Right cardiac atrium (tissue), 5 donors: ENCODE measurements at regions of chr12 and their contacts with region 1.

Region 1: GRCh38 chr12:121678716-121679580 is 9.5 kb upstream of the MORN3 start:
- DNase-seq: no peak
- ATAC-seq: no peak
- H3K4me3 ChIP-seq: no peak overlapping the region
- H3K27ac ChIP-seq: no peak overlapping the region
- H3K4me1 ChIP-seq: no peaks in the 10 kb centered on the region
- H3K27me3 ChIP-seq: no peaks in the 10 kb centered on the region

Region 2: DNA sequence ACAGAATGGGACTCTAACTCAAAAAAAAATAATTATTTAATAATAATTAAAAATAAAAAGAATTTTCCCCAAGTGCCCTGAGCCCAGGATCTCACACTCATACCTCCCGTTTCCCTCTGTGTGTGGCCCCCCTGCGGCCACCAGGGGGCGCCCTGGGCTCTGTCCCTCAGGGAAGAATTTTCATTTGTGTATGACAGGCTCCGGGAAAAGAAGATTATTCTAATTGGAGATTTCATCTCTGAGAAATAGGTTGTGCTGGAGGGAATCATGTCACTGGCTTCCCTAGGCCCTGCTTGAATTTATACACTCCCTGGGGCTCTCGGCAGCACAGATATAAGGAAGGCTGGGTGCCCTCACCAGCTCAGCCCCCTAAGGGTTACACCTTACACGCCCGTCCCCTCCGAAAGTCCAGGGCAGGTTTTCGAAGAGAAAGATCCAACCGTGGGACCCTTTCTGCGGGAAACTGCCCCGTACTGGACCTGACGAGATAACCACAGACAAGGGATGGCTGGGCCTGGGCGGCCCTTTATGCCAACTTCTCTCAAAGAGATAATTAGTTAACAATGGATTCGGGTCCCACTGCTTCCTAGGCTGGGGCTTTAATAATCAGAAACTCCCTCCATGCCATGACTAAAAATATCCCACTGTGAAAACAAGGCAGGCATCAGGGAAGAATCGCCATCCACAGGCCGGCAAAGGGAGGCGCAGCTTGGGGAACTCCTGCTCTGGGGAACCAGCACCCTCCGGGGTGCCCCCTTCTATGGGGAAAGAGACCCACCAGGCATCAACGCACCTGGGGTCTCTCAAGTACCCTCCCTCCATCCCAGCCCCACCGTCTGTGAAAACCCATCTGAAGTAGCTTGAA is 178.8 kb before region 1 on chr12:
- intact Hi-C with region 1: loop called in 2 of 4 experiments (anchors 5 to 10 kb)
- DNase-seq: peak; percentile 80 to 93 (median 93)
- ATAC-seq: peak; percentile 84 to 85
- H3K4me3 ChIP-seq: peak overlapping the region; percentile 19
- H3K27ac ChIP-seq: peak overlapping the region; percentile 88
- H3K4me1 ChIP-seq: no peaks in the 10 kb centered on the region
- H3K27me3 ChIP-seq: no peaks in the 10 kb centered on the region

Region 3: DNA sequence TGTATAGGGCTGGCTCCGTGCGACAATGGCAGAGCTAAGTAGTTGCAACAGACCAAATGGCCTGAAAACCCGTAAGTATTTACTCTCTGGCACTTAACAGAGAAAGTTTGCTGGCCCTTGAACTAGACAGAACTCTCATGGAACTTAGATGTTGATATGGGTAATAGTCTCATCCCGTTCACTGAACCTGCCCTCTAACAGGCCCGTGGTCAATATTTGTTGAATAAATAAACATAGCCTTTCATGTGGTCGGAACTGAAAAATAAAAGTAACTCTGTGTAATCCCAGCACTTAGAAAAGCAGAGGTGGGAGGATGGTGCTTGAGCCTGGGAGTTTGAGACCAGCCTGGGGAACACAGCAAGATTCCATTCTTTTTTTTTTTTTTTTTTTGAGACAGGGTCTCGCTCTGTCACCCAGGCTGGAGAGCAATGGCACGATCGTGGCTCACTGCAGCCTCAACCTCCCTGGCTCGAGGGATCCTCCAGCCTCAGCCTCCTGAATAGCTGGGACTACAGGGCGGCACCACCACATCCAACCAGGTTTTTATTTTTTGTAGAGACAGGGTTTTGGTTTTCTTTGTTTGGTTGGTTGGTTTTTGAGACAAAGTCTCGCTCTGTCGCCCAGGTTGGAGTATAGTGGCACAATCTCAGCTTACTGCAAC is 127.8 kb before region 1 on chr12:
- intact Hi-C with region 1: loop called (anchors 5 kb)
- DNase-seq: no peak
- ATAC-seq: no peak
- H3K4me3 ChIP-seq: no peak overlapping the region
- H3K27ac ChIP-seq: no peak overlapping the region
- H3K4me1 ChIP-seq: no peaks in the 10 kb centered on the region
- H3K27me3 ChIP-seq: no peaks in the 10 kb centered on the region

Region 4: DNA sequence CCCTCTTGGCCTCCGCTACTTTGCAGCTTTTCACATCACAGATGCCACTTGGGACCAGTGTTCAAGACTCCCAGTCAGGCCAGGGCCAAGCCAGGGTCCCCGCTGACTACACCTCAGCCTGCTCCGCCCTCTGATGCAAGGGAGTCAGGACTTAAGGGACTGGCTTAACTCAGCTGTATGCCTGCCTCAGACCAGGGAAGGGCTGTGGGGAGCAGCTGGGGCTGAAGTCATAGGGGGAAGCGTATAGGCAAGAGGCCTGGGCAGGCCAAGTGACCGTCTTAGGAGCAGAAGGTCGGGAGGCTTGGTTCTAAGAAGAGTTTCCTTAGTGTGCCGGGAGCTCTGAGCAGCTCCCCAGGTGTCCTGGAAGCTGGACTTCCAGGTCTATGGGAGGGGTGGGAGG is 120.0 kb before region 1 on chr12:
- intact Hi-C with region 1: loop called (anchors 5 kb)
- DNase-seq: no peak
- ATAC-seq: no peak
- H3K4me3 ChIP-seq: no peak overlapping the region
- H3K27ac ChIP-seq: no peak overlapping the region
- H3K4me1 ChIP-seq: no peaks in the 10 kb centered on the region
- H3K27me3 ChIP-seq: no peaks in the 10 kb centered on the region

Region 5: DNA sequence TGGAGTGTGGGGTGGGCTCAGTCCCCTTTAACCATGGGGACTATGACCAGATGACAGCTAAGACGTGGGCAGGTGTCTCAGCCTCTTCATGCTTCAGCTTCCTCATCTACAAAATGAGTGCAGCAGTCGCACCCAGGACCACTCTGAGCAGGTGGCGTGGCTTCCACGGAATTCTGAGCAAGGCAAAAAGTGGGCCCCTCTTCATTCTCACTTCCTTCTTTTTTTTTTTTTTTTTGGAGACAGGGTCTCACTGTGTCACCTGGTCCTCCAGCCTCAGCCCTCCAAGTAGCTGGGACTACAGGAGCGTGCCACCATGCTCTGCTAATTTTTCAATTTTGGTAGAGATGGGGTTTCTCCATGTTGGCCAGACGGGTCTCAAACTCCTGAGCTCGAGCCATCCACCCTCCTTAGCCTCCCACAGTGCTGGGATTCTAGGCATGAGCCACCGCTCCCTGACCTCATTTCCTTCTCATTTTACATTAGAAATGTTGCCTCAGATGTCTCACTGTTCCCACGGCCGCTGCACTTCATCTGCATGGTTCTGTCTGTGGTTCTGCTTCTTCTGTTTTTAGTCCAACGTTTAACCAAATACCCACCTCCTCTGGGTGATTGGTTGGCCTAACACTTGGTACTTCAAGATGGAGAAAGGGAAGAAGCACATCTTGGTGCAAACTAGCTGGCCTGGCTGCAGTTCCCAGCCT is 301.4 kb after region 1 on chr12:
- intact Hi-C with region 1: no loop called
- DNase-seq: peak in 1 of 3 donors; percentile 39
- ATAC-seq: no peak
- H3K4me3 ChIP-seq: no peak overlapping the region
- H3K27ac ChIP-seq: no peak overlapping the region
- H3K4me1 ChIP-seq: no peaks in the 10 kb centered on the region
- H3K27me3 ChIP-seq: no peaks in the 10 kb centered on the region